Colonic mucosa (tissue), 4 donors: ENCODE measurements at regions of chr1 and their contacts with region 1.

Region 1: DNA sequence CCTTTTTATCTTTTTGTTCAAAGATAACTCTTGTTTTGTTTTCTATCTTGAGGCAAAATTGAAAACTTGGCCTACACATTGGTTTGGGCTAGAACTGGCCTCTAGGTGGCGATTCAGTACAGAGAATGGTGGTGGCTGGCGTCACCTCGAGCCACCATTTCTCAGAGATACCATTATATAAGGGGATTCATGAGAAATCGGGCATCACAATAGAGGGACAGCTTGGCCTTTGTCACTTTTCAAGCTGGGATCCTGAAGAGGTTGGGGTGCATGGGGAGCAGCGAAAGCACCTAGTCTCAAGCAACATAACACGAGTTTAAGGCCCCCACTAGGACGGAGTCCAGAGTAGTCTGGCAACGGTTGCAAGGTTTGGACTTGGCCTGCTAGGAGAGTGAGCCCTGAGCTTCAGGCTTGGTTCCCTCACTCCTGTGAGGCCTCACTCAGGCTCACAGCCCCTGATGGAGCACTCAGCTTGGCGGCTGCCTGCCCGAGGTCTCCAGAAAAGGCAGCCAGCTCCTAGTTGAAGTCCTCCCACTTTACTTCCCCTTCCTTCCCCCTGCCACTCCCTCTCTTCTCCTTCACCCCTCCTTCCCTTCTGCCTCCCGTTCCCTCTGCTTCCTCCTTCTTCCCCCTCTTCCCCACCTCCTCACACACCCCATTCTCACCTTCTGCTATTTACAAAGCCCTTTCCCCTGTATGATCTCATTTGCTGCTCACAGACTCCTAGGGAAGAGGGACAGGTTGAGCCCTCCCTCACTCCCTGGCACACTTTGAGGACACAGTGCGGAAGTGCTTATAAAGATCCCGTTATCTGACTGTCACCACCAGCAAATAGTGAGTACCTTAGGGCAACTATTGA is 67.8 kb downstream of the LRIG2 start:
- DNase-seq: peak; percentile 73
- H3K4me3 ChIP-seq: no peak overlapping the region
- H3K27ac ChIP-seq: no peak overlapping the region
- H3K4me1 ChIP-seq: peaks cover 5% of the 10 kb centered on the region
- H3K27me3 ChIP-seq: no peaks in the 10 kb centered on the region
- CTCF ChIP-seq: peak; percentile 72

Region 2: DNA sequence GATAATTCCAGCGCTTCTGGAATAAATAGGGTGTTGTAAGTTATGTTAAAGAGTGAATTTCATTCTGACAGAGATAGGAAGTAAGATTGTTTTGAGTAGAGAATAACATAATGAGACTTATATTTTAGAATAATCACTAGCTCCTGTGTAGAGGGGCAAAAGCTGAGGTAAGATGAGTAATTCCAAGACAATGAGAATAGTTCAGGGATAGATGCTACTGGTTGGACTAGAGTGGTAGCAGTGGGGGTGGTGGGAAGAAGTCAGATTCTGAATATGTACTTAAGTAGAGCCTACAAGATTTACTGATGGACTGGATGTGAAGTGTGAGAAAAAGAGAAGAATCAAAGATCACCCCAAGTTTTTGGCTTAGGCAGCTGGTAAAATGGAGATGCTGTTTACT is 489.6 kb before region 1 on chr1:
- intact Hi-C with region 1: no loop called
- DNase-seq: no peak
- H3K4me3 ChIP-seq: no peak overlapping the region
- H3K27ac ChIP-seq: no peak overlapping the region
- H3K4me1 ChIP-seq: no peaks in the 10 kb centered on the region
- H3K27me3 ChIP-seq: no peaks in the 10 kb centered on the region
- CTCF ChIP-seq: no peak

Region 3: DNA sequence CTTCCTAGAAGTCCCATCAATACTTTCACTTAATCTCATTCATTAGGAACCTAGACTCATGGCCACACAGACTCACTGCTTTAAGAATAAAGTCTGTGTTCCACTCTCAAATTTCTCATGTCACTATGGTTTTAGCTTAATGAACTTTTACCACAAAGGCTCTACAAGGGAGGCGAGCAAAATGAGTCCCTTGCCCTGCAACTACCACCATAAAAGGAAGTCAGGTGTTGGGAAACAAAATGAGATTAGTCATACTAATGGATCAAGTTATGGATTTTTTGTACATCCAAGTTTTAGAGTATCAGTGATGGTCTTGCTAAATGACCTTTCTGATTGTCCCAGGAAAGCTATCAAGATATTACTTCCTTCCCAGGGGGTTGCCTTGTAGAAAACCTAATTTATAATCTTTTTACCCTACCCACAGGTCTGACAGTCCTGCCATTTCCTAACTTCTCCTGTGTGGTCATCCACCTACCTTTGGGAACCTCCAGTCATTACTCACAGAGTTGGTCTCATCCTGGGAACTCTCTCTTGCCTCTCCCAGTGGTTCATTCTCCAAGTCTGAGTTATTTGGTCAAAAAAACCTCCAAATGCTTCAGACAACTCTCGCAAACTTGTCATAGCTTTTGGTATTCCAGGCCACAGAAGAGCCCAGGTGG is 133.0 kb before region 1 on chr1:
- intact Hi-C with region 1: no loop called
- DNase-seq: no peak
- H3K4me3 ChIP-seq: no peak overlapping the region
- H3K27ac ChIP-seq: no peak overlapping the region
- H3K4me1 ChIP-seq: no peaks in the 10 kb centered on the region
- H3K27me3 ChIP-seq: no peaks in the 10 kb centered on the region
- CTCF ChIP-seq: no peak

Region 4: DNA sequence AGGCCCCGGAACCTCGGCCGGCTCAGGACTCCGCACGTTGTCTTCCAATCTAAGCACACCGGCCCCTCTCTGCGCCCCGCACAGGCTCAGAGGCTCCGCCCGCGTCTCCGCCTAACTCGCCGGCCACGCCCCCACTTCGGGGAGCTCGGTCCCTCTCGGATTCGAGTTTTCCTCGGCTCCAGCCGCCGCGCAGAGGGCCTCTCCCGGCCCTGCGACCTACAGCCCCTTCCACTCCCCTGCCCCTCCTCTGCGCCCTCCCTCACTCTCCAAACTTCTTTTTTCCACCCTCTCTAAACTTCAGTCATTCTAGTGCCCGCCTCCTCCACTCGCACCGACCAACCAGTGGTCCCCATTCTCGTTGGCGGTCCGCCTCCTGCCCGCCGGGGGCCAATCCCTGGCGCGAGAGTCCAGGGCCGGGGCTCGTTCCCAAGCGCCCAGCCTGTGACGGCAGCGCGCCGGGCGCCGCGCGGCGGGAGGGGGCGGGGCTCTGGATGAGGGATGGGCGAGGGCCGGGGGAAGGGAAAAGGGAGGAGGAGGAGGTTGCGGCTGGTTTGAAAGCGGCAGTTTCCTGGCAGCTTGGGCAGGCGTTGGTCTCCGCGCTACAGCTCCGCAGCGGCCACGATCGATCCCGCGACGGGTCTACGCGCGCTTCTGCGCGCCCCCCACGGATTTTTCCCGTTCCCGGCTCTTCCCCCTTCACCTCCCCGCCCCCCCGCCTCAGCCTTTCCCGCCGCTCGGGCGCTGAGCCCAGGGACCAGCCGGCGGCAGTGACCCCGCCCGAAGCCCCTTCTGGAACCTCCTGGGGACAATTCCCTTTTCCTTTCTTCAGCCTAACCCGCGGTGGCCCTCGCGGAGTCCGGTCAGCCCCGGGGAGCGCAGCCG is 249.4 kb after region 1 on chr1 and contains the start of gene MAGI3:
- intact Hi-C with region 1: loop called (anchors 10 kb)
- DNase-seq: peak; percentile 99
- H3K4me3 ChIP-seq: peak within 1 kb of the TSS; percentile 80
- H3K27ac ChIP-seq: peak within 1 kb of the TSS; percentile 88
- H3K4me1 ChIP-seq: peaks cover 5% of the 10 kb centered on the region
- H3K27me3 ChIP-seq: no peaks in the 10 kb centered on the region
- CTCF ChIP-seq: no peak
- total RNA-seq, gene MAGI3: 38.2 to 46.5 TPM

Region 5: DNA sequence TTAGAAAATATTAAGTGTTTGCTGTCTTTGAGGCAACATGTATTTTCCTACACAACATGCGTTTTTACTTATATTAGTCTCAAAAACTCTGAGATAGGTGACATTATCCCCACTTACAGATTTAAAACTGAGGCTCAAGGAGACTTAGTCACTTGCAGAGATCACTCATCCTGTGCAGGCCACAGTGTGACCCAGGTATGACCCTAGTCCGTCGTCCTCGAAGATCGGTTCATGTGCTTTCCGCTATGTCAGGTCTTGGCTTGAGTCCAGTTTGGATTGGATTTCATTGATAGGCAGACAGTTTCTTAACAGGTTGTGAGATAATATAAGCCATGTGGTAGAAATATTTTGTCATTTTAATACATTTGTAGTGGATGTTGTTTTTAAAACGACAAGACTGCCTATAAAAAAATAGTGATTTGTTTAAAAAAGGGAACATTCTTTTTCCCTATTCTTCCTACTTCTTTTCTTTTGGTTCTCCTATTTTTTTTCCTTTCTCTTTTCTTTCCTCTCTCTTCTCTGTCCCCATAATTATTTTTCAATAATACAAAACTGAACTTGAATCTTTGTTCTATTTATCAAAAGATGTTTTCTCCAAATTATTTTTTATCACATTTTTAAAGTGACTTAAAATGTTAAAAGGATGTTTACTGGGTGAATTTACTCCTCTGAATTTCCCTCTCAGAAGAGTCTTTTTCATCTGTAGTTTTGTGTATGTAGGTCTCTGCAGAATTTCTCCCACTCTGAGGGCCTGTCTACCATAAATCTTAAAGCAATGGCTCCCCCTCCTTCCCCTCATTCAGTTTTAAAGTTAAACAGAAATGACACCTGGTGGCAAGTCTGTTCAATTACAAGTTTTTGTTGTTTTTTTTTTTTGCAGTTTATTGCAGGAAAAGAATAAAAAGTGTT is 536.7 kb after region 1 on chr1:
- intact Hi-C with region 1: loop called (anchors 5 kb)
- DNase-seq: no peak
- H3K4me3 ChIP-seq: no peak overlapping the region
- H3K27ac ChIP-seq: no peak overlapping the region
- H3K4me1 ChIP-seq: no peaks in the 10 kb centered on the region
- H3K27me3 ChIP-seq: no peaks in the 10 kb centered on the region
- CTCF ChIP-seq: peak; percentile 49